PC-3 (cell line): ENCODE measurements at regions of chr16 and their contacts with region 1.

Region 1: GRCh38 chr16:67191995-67192681 is at the start of gene E2F4:
- DNase-seq: peak; percentile 88
- ATAC-seq: peak; percentile 95
- H3K4me3 ChIP-seq: peak within 1 kb of the TSS; percentile 98
- H3K27ac ChIP-seq: peak within 1 kb of the TSS; percentile 32
- H3K4me1 ChIP-seq: peaks cover 14% of the 10 kb centered on the region
- H3K27me3 ChIP-seq: no peaks in the 10 kb centered on the region
- CTCF ChIP-seq: no peak
- total RNA-seq, gene E2F4: 86.2 and 107 TPM in 2 replicates

Region 2: DNA sequence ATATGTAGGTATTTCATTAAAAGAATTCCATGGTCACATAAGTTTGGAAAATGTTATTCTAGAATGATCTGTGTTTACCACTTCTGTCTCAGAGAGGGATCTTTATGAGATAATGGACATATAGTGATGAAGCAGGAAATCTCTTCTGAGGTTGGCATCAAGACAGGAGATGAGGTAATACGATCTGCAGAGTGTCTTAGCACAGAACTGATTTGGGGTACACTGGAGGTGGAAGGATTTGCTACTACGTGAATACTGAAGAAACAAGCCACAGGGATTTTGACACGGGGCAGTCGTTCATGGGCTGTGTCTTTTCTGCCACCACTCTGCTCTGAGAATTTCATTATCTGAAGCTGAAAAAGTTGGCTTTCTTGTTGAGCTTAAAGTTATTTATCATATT is 157.7 kb before region 1 on chr16:
- CTCF ChIA-PET with region 1: no interaction called
- POLR2A ChIA-PET with region 1: no interaction called
- intact Hi-C with region 1: no loop called
- DNase-seq: no peak
- ATAC-seq: no peak
- H3K4me3 ChIP-seq: no peak overlapping the region
- H3K27ac ChIP-seq: no peak overlapping the region
- H3K4me1 ChIP-seq: peaks cover 4% of the 10 kb centered on the region; the same call in 1 of the 2 replicates
- H3K27me3 ChIP-seq: no peaks in the 10 kb centered on the region
- CTCF ChIP-seq: no peak

Region 3: GRCh38 chr16:67246934-67247697 is 55.0 kb after region 1 on chr16 and contains the start of gene FHOD1:
- CTCF ChIA-PET with region 1: no interaction called
- POLR2A ChIA-PET with region 1: no interaction called
- intact Hi-C with region 1: loop called (anchors 10 kb)
- DNase-seq: peak; percentile 91
- ATAC-seq: peak; percentile 55
- H3K4me3 ChIP-seq: peak within 1 kb of the TSS; percentile 89
- H3K27ac ChIP-seq: peak within 1 kb of the TSS; percentile 88
- H3K4me1 ChIP-seq: peaks cover 51% of the 10 kb centered on the region
- H3K27me3 ChIP-seq: no peaks in the 10 kb centered on the region
- CTCF ChIP-seq: no peak
- total RNA-seq, gene FHOD1: 45.5 and 57.1 TPM in 2 replicates